AG04449 (cell line): ENCODE measurements at regions of chr1 and their contacts with region 1.

Region 1: GRCh38 chr1:23184212-23184934 is 15.7 kb upstream of the LUZP1 start:
- DNase-seq: no peak
- H3K4me3 ChIP-seq: peak overlapping the region; percentile 41
- CTCF ChIP-seq: peak; percentile 45

Region 2: DNA sequence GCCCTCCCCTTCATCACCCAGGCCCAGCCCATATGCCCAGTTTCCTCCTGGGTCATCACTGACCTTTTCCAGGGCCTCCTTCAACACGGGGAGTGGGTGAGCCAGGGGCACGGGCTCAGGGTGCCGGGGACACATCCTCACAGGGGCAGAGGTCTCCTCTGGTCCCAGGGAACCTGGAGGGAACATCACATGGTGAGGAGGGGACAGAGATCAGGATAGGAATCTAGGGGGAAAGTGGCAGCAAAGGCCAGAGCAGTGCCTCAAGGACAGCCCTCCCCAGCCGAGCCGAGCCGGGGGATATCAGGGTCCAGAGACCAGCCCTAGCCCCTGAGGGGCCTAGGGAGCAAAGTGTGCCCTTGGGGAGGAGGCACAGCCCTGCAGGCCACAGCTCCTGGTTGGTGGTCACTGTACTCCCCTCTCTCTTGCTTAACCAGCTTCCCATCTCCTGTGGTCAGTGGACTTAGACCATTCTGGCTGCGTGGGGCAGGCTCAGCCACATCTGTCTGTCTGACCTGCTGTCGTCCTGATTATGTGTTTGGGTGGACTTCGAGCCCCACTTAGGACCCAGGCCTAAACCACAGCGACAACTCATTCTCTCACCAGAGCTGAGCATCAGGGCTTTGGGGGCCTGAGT is 221.2 kb before region 1 on chr1:
- CTCF ChIA-PET with region 1: no interaction called
- POLR2A ChIA-PET with region 1: no interaction called
- DNase-seq: no peak
- H3K4me3 ChIP-seq: no peak overlapping the region
- CTCF ChIP-seq: no peak

Region 3: GRCh38 chr1:23074012-23074411 is 110.4 kb before region 1 on chr1:
- CTCF ChIA-PET with region 1: interaction called, 34 read pairs
- POLR2A ChIA-PET with region 1: no interaction called
- DNase-seq: no peak
- H3K4me3 ChIP-seq: no peak overlapping the region
- CTCF ChIP-seq: no peak

Region 4: DNA sequence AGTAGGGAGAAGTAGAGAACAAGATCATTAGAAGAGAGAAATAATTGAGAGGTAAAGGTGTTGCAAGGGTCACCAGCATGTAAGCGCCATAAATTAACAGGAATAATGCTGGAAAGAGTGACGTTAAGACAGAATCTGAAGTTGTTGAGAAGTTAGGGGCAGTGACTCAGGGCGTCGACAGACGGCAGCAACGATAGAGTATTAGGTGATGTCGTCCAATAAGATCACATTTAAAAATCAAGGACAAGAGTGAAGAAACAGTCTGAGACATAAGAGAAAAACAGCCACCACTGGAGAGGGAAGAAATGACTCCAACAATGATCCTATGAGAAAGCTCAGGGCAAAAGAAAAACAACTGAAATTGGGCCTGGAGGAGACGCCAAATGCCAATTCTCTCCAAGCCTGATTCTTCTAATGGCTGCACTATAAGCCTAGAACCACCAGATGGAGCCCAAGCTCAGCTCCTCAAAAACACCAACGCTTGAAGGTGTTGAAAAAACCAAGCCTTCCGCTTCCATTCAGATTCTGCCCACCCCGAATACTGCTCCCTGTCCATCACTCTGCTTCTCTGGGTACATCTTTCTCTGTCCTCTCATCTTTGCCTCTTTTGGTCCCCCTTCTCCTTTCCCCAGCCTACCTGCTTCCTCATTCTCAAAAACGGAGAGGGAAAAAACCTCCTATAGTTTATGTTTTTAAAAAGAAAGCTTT is 85.8 kb before region 1 on chr1:
- CTCF ChIA-PET with region 1: interaction called, 579 read pairs
- POLR2A ChIA-PET with region 1: interaction called, 7 read pairs
- DNase-seq: no peak
- H3K4me3 ChIP-seq: no peak overlapping the region
- CTCF ChIP-seq: peak; percentile 83

Region 5: DNA sequence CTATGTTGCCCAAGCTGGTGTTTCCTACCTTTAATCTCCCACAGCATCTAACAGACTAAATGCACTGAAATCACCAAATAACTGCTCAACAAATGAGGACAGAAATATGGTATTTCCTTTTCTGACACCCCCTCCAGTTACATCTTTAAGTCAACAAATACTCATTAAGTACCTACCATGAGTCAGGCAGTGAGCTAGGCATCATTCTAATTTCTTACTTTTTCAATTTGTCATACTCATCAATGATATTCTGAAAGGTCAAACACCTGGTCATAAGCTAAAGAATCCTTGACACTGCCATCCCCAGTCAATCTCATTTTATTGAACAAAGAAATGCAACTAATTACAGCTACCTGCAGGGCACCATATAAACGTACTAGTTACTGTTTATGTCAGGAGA is 52.3 kb before region 1 on chr1:
- CTCF ChIA-PET with region 1: interaction called, 11 read pairs
- POLR2A ChIA-PET with region 1: no interaction called
- DNase-seq: no peak
- H3K4me3 ChIP-seq: no peak overlapping the region
- CTCF ChIP-seq: no peak

Region 6: DNA sequence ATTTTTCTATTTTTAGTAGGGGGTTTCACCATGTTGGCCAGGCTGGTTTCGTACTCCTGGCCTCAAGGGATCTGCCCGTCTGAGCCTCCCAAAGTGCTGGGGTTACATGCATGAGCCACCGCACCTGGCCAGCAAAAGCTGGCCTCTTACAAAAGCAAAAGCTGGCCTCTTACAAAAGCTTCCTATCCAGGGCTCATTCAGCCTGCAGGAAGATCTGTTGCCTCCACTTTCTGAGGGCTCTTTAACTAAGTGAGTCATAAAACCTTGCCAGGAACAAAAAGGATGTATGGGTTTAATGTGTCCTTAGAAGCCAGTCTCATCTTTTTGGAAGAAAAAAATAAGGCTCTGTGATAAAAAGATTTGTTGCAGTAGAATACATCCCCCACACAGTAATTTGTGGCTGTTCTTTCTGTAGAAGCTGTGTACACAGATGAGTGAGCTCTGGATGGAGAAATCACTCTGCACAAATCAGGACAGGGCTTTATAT is 17.9 kb after region 1 on chr1:
- CTCF ChIA-PET with region 1: interaction called, 150 read pairs
- POLR2A ChIA-PET with region 1: no interaction called
- DNase-seq: no peak
- H3K4me3 ChIP-seq: no peak overlapping the region
- CTCF ChIP-seq: no peak

Region 7: GRCh38 chr1:23436520-23437354 is 252.4 kb after region 1 on chr1:
- CTCF ChIA-PET with region 1: no interaction called
- POLR2A ChIA-PET with region 1: no interaction called
- DNase-seq: no peak
- H3K4me3 ChIP-seq: no peak overlapping the region
- CTCF ChIP-seq: no peak